ENCODE measurements at regions of chr17 and their contacts with region 1.

Region 1: GRCh38 chr17:42980398-42981397 is at the start of gene RUNDC1:
- H3K4me3 Mint-ChIP-seq: peak within 1 kb of the TSS; percentile 99
- H3K27ac Mint-ChIP-seq: peak within 1 kb of the TSS; percentile 95
- H3K4me1 Mint-ChIP-seq: peaks cover 52% of the 10 kb centered on the region
- H3K27me3 Mint-ChIP-seq: peaks cover 4% of the 10 kb centered on the region

Region 2: GRCh38 chr17:42917236-42917603 is 63.5 kb before region 1 on chr17:
- intact Hi-C with region 1: no loop called
- H3K4me3 Mint-ChIP-seq: no peak overlapping the region
- H3K27ac Mint-ChIP-seq: no peak overlapping the region
- H3K4me1 Mint-ChIP-seq: peaks cover 5% of the 10 kb centered on the region
- H3K27me3 Mint-ChIP-seq: peaks cover 1% of the 10 kb centered on the region

Region 3: DNA sequence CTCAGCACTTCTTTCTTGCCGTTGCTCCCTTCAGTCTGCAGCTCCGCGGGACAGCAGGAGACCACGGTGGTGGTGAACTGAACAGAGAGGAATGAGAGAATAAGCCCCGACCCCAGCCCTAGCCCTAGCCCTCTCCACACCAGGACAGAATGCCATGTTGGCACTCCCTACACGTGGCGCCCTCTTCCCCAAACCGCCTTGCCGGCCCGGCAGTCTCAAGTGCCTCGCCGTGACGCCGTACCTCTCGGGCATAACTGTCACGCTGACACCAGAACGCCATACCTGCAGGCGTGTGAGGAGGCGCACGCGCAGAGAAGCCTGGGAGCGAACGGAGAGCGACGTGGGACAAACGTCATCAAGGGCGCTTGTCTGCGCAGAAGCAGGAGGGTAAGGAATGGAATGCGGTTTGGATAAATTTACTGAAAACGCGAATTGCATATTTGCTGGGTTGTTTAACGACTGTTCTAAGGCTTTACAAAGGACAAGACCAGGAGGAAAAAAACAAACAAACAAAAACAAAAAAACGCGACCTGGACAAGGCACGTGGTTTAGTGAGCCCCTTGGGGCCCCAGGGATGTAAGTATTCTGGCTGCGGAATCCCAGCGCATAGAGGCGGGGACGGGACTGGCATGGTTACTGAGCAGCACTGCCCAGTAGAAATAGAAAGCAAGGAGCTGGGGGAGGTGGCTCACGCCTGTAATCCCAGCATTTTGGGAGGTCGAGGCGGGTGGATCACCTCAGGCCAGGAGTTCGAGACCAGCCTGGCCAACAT is 16.4 kb before region 1 on chr17 and contains the start of gene AARSD1:
- intact Hi-C with region 1: loop called (anchors 2 kb)
- H3K4me3 Mint-ChIP-seq: peak within 1 kb of the TSS; percentile 92
- H3K27ac Mint-ChIP-seq: peak within 1 kb of the TSS; percentile 88
- H3K4me1 Mint-ChIP-seq: peaks cover 26% of the 10 kb centered on the region
- H3K27me3 Mint-ChIP-seq: no peaks in the 10 kb centered on the region